Activated T-helper 1 cell treated with anti-CD3 and anti-CD28 coated beads, Interleukin-12 subunit alpha, Interleukin-12 subunit beta, Interleukin-2, Interleukin-4 antibody, amounts not matched to agents 30 ng/mL and 10 ng/mL and 1 ng/mL, durations not matched to agents 14 hours and 24 hours and 36 hours (primary cell): ENCODE measurements at regions of chr1 and their contacts with region 1.

Region 1: DNA sequence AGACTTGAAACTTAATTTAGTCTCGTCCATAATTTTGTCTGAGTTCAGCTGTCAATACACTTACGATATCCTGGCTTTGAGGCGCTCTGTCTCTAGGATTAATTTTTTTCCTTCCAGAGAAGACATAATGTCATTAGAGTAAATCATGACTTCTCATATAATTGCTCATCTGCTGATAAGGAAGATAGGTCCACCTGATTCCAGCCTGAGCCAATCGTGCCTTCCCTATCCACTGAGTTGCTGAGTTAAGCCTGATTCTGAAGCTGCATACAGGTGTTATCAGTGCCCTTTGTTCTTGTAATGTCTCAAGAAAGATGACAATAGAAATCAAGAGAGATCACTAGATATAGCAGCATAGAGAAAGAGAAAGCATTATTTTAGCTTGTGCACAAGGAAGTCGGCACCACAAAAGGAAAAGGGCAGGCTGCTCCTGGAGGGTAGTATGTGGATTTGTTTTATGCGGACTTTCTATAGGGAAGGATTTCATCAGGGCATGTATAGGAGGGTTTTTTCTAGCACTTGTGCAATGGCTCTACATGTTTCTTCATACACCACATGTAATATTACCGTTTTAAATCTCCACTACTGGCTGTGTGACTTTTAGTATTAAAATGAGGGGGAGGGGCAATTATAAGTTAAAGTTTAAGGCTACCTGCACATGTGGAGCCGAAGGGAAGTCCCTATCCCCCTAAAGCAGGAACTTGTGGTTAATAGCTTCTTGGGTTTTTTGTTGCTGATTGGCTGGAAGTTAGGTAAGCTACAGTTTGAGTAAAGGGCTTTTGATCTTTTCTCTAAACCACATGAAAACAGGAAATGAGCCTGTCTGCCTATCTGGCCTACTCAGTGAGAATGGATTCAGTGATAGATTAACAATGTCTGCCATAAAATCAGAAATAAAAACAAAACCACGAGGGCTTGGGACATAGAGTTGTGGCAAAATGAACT is 133.4 kb downstream of the PLPPR5 start:
- DNase-seq: peak; percentile 52
- H3K4me3 Mint-ChIP-seq: peak overlapping the region; percentile 75
- H3K27ac Mint-ChIP-seq: peak overlapping the region; percentile 92
- H3K4me1 Mint-ChIP-seq: peaks cover 18% of the 10 kb centered on the region
- H3K27me3 Mint-ChIP-seq: no peaks in the 10 kb centered on the region

Region 2: DNA sequence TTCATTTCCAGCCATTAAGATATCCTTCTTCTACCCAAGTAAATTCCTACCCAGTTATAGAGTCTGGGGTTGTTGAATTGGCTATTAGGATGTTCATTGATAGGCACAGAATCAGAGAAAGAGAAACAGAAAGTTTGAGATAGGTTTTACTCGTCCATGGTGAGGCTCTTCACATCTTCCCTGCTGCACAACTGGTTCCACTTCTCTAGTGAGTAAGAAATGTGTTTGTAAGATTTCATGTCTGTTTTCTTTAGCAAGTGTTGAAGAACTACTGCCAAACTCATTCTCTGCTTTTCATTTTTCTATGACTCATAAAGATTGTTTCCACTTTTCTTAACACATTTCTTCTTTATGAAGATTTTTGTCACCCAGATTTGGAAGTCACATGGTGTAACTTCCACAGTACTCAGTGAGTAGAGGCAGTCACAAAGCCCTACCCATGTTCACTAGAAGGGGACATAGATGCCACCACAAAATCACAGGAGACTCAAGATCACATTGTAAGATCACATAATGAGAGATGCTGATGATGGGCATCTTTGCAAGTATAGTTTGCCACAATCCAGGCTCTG is 57.4 kb before region 1 on chr1:
- intact Hi-C with region 1: loop called (anchors 5 kb)
- DNase-seq: no peak
- H3K4me3 Mint-ChIP-seq: peak overlapping the region; percentile 3
- H3K27ac Mint-ChIP-seq: peak overlapping the region; percentile 30
- H3K4me1 Mint-ChIP-seq: peaks cover 16% of the 10 kb centered on the region
- H3K27me3 Mint-ChIP-seq: no peaks in the 10 kb centered on the region

Region 3: GRCh38 chr1:98839840-98840239 is 31.4 kb before region 1 on chr1:
- intact Hi-C with region 1: no loop called
- DNase-seq: no peak
- H3K4me3 Mint-ChIP-seq: no peak overlapping the region
- H3K27ac Mint-ChIP-seq: no peak overlapping the region
- H3K4me1 Mint-ChIP-seq: no peaks in the 10 kb centered on the region
- H3K27me3 Mint-ChIP-seq: peaks cover under 1% of the 10 kb centered on the region